GM13976 (cell line): ENCODE measurements at regions of chr10 and their contacts with region 1.

Region 1: GRCh38 chr10:7410862-7411670 is at the start of gene SFMBT2:
- DNase-seq: peak; percentile 87
- CTCF ChIP-seq: no peak

Region 2: DNA sequence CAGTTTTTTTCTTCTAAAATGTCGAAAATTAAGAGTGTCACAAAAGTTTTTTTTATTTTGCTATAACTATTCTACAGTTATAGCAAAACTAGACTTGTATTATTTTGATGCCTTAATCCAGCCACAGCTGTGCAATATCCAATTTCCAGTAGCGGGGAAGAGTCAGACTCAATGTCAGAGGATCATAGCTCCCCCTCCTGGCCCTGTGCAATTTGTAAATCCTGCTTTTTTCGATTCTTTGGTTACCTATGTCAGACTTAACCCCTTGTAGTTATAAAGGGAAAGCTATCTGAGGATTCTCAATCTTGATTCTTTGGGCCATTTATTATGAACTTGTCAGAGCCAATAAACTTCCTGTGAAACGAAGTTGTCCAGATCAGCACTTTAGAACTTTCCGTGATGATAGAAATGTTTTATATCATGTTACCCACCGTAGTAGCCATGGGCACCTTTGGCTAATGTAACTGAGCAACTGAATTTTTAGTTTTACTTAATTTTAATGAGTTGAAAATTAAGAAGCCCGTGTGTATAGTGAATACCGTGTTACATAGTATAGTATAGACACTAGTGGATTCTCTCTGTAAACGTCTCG is 743.3 kb before region 1 on chr10:
- in situ Hi-C with region 1: loop called (anchors 25 kb)
- DNase-seq: no peak
- CTCF ChIP-seq: peak; percentile 27

Region 3: DNA sequence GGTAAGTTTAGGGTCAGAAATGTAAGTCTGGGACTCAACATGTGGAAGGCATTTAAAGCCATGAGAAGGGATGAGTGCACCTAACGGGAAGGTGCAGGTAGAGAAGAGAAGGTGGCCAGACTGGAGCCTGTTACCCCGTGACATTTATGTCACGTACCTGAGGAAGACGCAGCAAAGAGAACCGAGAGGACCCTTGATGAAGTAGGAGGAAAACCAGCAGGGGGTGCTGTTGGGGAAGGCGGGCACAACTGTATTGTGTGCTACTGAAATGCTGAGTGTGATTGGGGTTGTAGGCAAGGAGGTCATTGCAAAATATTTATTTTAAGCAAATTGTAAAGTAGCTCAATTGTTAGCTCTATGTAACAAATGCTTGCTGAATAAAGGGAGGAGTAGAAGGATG is 492.8 kb before region 1 on chr10:
- in situ Hi-C with region 1: loop called (anchors 10 kb)
- DNase-seq: peak; percentile 29
- CTCF ChIP-seq: peak; percentile 50

Region 4: GRCh38 chr10:7121154-7121810 is 289.8 kb before region 1 on chr10:
- in situ Hi-C with region 1: loop called (anchors 25 kb)
- DNase-seq: peak; percentile 75
- CTCF ChIP-seq: peak; percentile 50

Region 5: GRCh38 chr10:7260412-7260900 is 150.6 kb before region 1 on chr10:
- in situ Hi-C with region 1: loop called (anchors 10 kb)
- DNase-seq: peak; percentile 65
- CTCF ChIP-seq: peak; percentile 48

Region 6: DNA sequence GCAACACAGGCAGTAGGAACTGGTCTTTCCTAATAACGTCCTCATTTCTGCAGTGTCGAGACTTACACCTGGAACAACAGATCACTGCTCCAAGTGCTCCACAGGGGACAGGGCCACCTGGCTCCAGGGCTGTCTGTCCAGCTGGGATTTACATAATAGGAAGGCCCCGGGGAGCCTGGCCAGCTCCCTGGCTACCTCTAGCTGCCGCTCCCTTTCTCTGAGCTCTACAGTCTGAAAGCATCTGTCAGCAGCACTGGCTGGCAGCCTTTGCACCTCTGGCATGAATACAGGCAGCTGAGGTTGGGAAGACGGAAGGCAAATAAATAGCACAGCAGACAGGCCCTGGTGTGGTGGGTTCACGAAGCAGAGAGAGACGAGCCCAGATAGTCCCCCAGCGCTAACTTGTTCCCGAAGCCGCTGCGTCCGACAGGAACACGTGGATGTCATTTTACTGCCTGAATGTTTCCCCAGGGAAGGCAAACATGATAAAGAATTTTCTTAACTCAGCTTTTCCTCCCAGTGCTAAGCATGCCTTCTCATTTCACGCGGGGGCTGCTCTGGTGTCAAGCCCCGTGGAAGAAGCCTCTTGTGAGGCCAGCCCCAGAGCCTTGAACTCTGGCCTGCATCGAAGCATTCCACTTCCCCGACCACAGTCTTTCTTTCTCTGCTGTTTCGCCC is 150.3 kb after region 1 on chr10:
- in situ Hi-C with region 1: no loop called
- DNase-seq: no peak
- CTCF ChIP-seq: no peak